IMR-90 (cell line): ENCODE measurements at regions of chr5 and their contacts with region 1.

Region 1: DNA sequence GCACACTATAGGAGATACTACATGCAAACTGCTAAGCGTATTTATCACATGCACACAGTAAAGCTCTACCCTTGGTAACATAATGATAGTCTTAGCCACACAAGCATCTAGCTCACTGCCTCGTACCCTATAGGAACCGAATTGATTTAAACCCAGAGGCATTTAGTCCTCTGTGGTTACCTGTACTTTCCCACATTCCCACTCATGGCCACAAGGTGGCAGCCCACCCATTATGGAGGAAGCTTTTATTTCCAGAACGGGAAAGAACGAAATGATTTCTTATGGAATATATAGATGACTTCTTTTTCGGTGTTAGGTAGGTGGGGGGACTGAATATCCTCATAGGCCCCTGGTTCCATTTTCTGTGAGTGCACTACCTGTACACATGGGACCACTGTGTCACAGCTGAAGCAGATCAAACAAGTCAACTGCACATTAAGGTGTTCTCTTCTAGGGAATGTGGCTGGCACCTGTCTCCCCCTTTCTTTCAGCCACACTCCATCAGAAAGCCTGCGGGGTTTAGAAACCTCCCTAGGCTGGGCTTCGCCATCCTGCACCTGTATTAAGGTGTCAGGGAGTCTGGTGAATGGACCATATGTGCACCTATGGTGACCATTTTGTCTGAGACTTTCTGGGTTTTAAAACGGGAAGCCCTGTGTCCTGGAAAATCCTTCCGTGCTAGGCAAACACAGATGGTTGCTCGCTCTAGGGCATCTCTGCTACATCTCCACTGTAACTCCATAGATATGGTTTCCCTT is 313.2 kb downstream of the SLIT3 start:
- DNase-seq: peak; percentile 58
- ATAC-seq: peak; percentile 83
- H3K4me3 ChIP-seq: no peak overlapping the region
- H3K27ac ChIP-seq: no peak overlapping the region
- H3K4me1 ChIP-seq: no peaks in the 10 kb centered on the region
- H3K27me3 ChIP-seq: peaks cover 3% of the 10 kb centered on the region
- CTCF ChIP-seq: peak; percentile 82
- POLR2A ChIP-seq: no peak
- RAD21 ChIP-seq: peak; percentile 82

Region 2: DNA sequence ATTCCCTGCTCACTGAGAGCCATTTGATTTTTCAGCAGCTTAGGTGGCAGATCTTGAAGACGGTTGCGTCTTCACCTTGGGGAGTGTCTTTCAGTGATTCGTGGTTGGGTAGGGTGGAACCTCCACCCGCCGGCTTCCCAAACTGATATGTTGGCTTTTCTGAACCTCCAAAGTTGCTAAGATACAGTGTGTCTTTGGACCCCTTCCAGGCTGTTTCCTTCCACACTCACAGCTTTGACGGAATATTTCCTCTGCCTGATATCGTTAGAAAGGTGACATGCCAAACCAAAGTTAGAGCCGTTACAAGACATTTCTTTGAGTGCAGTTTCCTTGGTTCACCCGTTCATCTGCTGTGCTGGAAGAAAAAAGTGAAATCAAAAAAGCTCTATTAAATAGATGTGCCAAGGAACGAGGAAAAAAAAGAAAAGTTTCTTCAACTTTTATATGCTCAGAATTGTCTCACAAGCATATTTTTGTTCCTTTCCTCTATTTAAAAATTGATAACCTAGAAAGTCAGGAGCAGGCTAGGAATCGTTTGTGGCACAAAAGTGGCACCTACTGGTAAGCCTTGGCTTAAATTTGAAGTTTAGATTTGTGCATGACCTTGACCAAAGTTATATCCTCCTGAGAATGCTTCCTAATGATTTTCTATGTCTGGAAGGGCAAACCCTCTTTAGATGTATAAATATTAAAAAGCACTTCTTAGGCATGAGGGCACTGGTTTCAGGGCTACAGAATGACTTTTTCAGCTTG is 967.0 kb before region 1 on chr5:
- CTCF ChIA-PET with region 1: no interaction called
- POLR2A ChIA-PET with region 1: no interaction called
- dilution Hi-C with region 1: no loop called
- in situ Hi-C with region 1: no loop called
- intact Hi-C with region 1: no loop called
- DNase-seq: peak; percentile 8
- ATAC-seq: peak; percentile 37; the same call in 1 of the 2 replicates
- H3K4me3 ChIP-seq: no peak overlapping the region
- H3K27ac ChIP-seq: no peak overlapping the region
- H3K4me1 ChIP-seq: no peaks in the 10 kb centered on the region
- H3K27me3 ChIP-seq: peaks cover 20% of the 10 kb centered on the region
- CTCF ChIP-seq: peak; percentile 41
- POLR2A ChIP-seq: no peak
- RAD21 ChIP-seq: peak; percentile 60

Region 3: DNA sequence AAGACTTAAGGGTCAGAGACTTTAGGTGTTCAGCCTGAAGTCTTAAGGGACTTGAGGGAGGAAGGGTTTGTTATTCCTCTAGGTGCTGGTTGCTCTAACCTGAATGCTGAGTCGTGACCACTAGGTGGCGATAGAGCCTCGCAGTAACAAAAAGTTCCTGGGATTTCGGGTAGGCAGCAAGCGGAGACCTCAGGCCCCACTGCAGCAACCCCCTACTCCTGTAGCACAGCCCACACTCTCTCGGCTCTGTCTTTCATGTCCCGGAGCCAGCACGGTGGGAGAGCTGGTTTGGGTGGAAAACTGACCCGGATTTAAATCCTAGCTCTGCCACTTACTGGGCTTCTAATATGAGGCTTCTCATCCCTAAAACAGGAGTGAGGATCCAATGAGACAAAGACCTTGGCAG is 308.2 kb before region 1 on chr5:
- CTCF ChIA-PET with region 1: no interaction called
- POLR2A ChIA-PET with region 1: no interaction called
- dilution Hi-C with region 1: no loop called
- in situ Hi-C with region 1: no loop called
- intact Hi-C with region 1: loop called (anchors 1 kb)
- DNase-seq: peak; percentile 70
- ATAC-seq: peak; percentile 82
- H3K4me3 ChIP-seq: no peak overlapping the region
- H3K27ac ChIP-seq: no peak overlapping the region
- H3K4me1 ChIP-seq: no peaks in the 10 kb centered on the region
- H3K27me3 ChIP-seq: no peaks in the 10 kb centered on the region; the same call in 1 of the 2 replicates
- CTCF ChIP-seq: peak; percentile 83
- POLR2A ChIP-seq: no peak
- RAD21 ChIP-seq: peak; percentile 84

Region 4: GRCh38 chr5:168931638-168932345 is 55.9 kb before region 1 on chr5:
- CTCF ChIA-PET with region 1: no interaction called
- POLR2A ChIA-PET with region 1: no interaction called
- dilution Hi-C with region 1: no loop called
- in situ Hi-C with region 1: no loop called
- intact Hi-C with region 1: no loop called
- DNase-seq: no peak
- ATAC-seq: no peak
- H3K4me3 ChIP-seq: no peak overlapping the region
- H3K27ac ChIP-seq: no peak overlapping the region
- H3K4me1 ChIP-seq: no peaks in the 10 kb centered on the region
- H3K27me3 ChIP-seq: no peaks in the 10 kb centered on the region
- CTCF ChIP-seq: no peak
- POLR2A ChIP-seq: no peak
- RAD21 ChIP-seq: no peak

Region 5: GRCh38 chr5:169302491-169303118 is 314.9 kb after region 1 on chr5:
- CTCF ChIA-PET with region 1: interaction called, 4 read pairs
- POLR2A ChIA-PET with region 1: no interaction called
- dilution Hi-C with region 1: no loop called
- in situ Hi-C with region 1: no loop called
- intact Hi-C with region 1: loop called (anchors 2 kb)
- DNase-seq: peak; percentile 73
- ATAC-seq: peak; percentile 76
- H3K4me3 ChIP-seq: no peak overlapping the region
- H3K27ac ChIP-seq: no peak overlapping the region
- H3K4me1 ChIP-seq: no peaks in the 10 kb centered on the region
- H3K27me3 ChIP-seq: peaks cover 30% of the 10 kb centered on the region
- CTCF ChIP-seq: peak; percentile 80
- POLR2A ChIP-seq: no peak
- RAD21 ChIP-seq: peak; percentile 63

Region 6: GRCh38 chr5:169583424-169584204 is 595.9 kb after region 1 on chr5 and contains the start of gene SPDL1:
- CTCF ChIA-PET with region 1: interaction called, 5 read pairs
- POLR2A ChIA-PET with region 1: interaction called, 3 read pairs
- dilution Hi-C with region 1: no loop called
- in situ Hi-C with region 1: loop called (anchors 5 kb)
- intact Hi-C with region 1: loop called (anchors 1 kb)
- DNase-seq: peak; percentile 95
- ATAC-seq: peak; percentile 95
- H3K4me3 ChIP-seq: peak within 1 kb of the TSS; percentile 66
- H3K27ac ChIP-seq: peak within 1 kb of the TSS; percentile 72
- H3K4me1 ChIP-seq: peaks cover 2% of the 10 kb centered on the region; the same call in 1 of the 2 replicates
- H3K27me3 ChIP-seq: no peaks in the 10 kb centered on the region
- CTCF ChIP-seq: no peak
- POLR2A ChIP-seq: peak; percentile 87
- RAD21 ChIP-seq: no peak
- total RNA-seq, gene SPDL1: 18.8 and 48.6 TPM in 2 replicates

Region 7: DNA sequence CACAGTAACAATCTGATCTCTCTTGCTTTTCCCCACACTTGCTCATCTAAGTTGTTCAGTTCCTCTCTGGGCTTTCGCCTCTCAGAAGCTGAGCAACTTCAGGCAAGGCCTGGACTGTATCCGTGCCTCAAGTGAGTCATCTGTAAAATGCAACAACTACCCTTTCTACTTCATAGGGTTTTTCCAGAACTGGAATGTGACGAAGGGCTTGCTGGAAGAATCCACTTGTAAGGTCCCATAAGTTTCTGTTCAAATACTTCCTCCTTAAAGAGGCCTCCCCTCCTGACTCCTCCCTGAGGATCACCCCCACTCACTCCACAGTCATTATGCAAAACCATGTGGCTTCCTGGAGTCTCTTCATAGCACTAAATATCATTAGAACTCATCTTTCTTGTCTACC is 1010.1 kb after region 1 on chr5:
- CTCF ChIA-PET with region 1: no interaction called
- POLR2A ChIA-PET with region 1: no interaction called
- dilution Hi-C with region 1: no loop called
- in situ Hi-C with region 1: no loop called
- intact Hi-C with region 1: loop called (anchors 5 kb)
- DNase-seq: no peak
- ATAC-seq: no peak
- H3K4me3 ChIP-seq: no peak overlapping the region
- H3K27ac ChIP-seq: no peak overlapping the region
- H3K4me1 ChIP-seq: no peaks in the 10 kb centered on the region
- H3K27me3 ChIP-seq: no peaks in the 10 kb centered on the region; the same call in 1 of the 2 replicates
- CTCF ChIP-seq: no peak
- POLR2A ChIP-seq: no peak
- RAD21 ChIP-seq: no peak